ENCODE measurements at regions of chr6 and their contacts with region 1.

Region 1: DNA sequence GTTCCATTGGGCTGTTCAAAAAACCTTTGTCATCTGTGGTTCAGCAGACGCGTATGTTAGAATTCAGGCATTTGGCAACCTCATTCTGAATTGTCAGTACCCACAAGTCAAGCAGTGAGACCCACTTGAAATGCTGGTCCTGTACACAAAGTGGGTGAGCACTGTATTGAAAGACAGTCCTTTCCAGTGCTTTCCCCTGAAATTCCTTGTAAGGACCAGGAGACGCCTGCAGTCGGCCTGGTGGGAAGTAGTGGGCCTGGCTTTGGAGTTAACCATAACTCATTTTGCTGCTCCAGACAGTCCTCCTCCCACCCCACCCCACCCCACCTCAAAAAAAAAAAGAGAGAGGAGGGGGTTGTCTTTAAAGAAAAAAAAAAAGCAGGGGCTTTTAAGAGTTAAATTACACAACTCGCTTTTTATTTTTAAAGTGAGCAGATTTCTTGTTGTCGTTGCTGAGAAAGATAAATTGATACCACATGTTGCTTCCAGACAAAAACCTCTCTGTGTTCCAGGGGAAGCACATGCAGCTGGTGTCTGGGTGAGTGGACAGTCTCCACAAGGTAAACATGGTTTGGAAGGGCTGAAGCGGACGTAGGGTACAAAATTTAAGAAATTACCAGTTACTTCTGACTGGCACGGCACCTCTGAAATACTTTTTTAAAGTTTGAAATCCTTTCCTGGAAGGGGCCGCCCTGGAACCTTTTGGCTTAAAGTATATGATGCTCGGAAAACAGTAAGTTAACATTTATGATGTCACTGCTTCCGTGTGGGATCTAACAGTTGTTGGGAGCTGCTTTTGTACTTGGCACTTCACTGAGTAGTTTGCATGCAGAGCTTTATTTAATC is 95.3 kb downstream of the FOXO3 start:
- DNase-seq: peak; percentile 77
- H3K4me3 ChIP-seq: peak overlapping the region in 1 of 4 donors; percentile 3
- H3K27ac ChIP-seq: peak overlapping the region; percentile 69 to 87 (median 84)
- H3K4me1 ChIP-seq: peaks cover 0 to 83% (median 75%) of the 10 kb centered on the region in 4 donors
- H3K27me3 ChIP-seq: no peaks in the 10 kb centered on the region
- CTCF ChIP-seq: no peak
- EP300 ChIP-seq: peak in 1 of 4 donors; percentile 45
- POLR2A ChIP-seq: no peak

Region 2: DNA sequence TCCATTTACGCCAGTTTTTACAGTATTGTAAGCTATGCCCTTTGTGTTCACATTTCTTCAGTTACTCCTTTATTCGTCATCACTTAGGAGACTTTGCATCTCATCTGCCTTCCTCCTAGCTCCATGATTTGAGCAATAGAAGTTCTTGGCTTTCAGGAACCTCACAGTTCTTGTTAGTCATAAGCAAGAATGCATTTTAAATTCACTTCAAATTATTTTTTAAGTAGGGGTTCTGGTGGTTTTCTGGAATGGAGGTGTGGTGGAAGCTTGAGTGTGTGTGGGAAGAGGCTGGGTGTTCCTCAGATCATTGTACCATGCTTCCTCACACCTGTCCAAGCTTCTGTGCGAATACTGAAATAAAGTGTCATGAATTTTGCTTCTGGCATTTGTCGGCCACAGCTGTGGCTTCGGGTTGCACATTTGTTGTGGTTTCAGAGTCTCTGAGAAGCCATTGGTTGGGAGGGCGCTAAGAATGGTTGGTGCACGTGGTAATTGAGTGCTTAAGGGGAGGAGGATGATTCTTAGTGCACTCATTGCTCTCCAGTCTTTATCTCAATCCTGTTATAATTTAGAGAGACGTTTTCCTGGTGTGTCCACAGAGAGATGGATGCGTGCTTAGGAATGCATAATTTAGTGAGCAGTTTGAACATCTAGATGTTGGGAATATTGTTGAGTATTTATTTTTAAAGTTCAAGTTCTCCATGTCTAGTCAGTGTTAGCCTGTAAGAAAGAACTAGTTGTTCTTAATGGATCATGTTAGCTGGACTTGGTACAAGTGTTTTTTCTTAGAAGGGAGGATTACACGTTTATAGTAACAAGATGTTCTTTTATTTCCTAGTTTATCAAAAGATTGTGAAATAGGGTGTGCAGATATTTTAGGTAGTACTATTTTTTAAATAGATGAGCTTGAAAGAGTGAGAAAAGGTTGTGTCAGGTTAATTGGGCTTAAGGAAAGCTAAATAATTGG is 63.4 kb before region 1 on chr6:
- intact Hi-C with region 1: loop called (anchors 2 kb)
- DNase-seq: peak; percentile 81
- H3K4me3 ChIP-seq: no peak overlapping the region
- H3K27ac ChIP-seq: peak overlapping the region; percentile 81 to 90 (median 86)
- H3K4me1 ChIP-seq: peaks cover 2 to 100% (median 98%) of the 10 kb centered on the region in 4 donors
- H3K27me3 ChIP-seq: no peaks in the 10 kb centered on the region
- CTCF ChIP-seq: no peak
- EP300 ChIP-seq: peak in 2 of 4 donors; percentile 74 to 90
- POLR2A ChIP-seq: no peak

Region 3: GRCh38 chr6:108616544-108616943 is 39.5 kb before region 1 on chr6:
- intact Hi-C with region 1: loop called (anchors 5 kb)
- DNase-seq: no peak
- H3K4me3 ChIP-seq: no peak overlapping the region
- H3K27ac ChIP-seq: peak overlapping the region in 2 of 4 donors; percentile 36 to 40
- H3K4me1 ChIP-seq: peaks cover 0 to 73% (median 63%) of the 10 kb centered on the region in 4 donors
- H3K27me3 ChIP-seq: no peaks in the 10 kb centered on the region
- CTCF ChIP-seq: no peak
- EP300 ChIP-seq: no peak
- POLR2A ChIP-seq: no peak

Region 4: DNA sequence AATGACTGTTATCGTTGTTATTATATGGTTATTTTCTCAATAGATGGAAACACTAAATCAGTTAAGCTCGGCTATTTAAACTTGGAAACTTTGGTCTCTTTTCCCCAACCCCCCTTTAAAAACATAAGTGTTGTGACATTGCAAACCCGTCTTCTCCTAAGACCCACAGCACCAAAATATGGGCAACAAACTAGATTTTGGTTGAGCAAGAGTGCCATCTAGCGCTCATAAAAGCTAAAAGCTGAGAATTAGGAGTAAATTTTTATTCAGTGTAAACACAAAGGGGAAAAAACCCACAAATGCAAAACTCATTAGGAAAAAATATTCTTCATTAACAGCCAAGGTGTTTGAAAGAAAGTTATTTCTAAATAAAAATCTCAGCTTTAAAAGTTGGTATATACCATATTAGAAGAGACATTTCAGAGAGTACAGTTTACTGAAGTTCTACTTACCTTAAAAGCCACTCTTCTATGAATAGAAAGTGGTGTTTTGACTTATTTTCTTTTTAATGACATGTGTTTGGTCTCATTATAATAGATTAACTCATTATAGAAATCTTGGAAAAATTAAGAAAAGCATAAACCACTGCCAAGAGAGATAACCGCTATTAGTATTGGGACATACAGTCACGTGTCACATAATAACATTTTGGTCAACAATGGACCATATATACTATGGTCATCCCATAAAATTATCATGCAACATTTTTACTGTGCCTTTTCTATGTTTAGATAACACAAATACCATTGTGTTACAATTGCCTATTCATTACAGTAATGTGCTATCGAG is 417.5 kb after region 1 on chr6:
- intact Hi-C with region 1: no loop called
- DNase-seq: no peak
- H3K4me3 ChIP-seq: no peak overlapping the region
- H3K27ac ChIP-seq: peak overlapping the region in 1 of 4 donors; percentile 8
- H3K4me1 ChIP-seq: peaks cover 0 to 48% (median 19%) of the 10 kb centered on the region in 4 donors
- H3K27me3 ChIP-seq: no peaks in the 10 kb centered on the region
- CTCF ChIP-seq: peak; percentile 45 to 63 (median 56)
- EP300 ChIP-seq: peak in 1 of 4 donors; percentile 16
- POLR2A ChIP-seq: no peak